ENCODE measurements at regions of chr1 and their contacts with region 1.

Region 1: DNA sequence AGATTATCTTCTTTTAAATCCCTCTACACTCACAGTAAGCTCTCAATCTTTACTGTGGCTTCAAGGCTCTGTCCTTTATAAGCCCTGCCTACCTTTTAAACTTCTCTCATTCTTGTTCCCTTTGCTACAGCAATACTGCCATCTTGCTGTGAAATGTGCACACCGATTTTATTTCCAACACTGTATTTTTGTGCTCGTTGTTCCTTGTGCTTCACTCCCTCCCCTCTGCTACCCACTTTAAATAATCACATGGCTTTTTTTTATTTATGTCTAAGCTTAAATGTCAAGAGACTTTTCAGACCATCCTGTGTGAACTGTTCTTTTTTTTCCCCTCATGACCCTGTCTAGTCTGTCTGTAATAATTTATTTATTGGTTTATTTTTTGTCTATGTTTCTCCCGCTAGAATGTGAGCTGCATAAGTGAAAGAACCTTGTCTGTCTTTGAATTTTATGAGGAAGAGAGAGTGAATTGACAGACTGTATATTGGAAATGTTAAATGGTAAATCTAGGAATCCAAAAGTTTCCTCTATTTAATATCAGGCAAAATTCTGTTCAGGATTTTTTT is 45.7 kb downstream of the ABCD3 start:
- DNase-seq: no peak
- ATAC-seq: peak; percentile 68
- H3K4me3 ChIP-seq: no peak overlapping the region
- H3K27ac ChIP-seq: no peak overlapping the region
- H3K4me1 ChIP-seq: no peaks in the 10 kb centered on the region
- H3K27me3 ChIP-seq: no peaks in the 10 kb centered on the region
- CTCF ChIP-seq: peak; percentile 21 to 64 (median 49); a peak in 5 of 6 replicates
- EP300 ChIP-seq: no peak
- POLR2A ChIP-seq: no peak
- RAD21 ChIP-seq: peak; percentile 78

Region 2: DNA sequence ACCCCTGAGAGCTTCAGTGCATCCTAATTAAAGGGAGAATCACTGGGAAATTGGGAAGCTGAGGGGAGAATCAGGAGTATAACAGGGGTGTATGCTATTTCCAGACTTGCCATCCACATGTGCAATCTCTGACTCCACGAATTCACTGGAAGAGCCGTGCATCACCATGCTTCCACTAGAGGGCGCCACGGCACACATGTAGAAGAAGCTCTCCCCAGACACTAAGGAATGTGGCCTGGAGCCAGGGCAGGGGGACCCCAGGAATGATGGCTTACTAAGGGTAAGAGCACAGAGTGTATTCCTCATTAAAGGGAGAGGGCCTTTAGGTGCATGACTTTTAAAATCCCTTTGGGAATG is 424.4 kb before region 1 on chr1:
- CTCF ChIA-PET with region 1: interaction called, 32 read pairs
- POLR2A ChIA-PET with region 1: no interaction called
- RAD21 ChIA-PET with region 1: interaction called, 3 read pairs
- SMC1A ChIA-PET with region 1: interaction called, 7 read pairs
- in situ Hi-C with region 1: no loop called
- intact Hi-C with region 1: no loop called
- DNase-seq: no peak
- ATAC-seq: peak; percentile 65
- H3K4me3 ChIP-seq: no peak overlapping the region
- H3K27ac ChIP-seq: no peak overlapping the region
- H3K4me1 ChIP-seq: peaks cover 6% of the 10 kb centered on the region; the same call in 1 of the 2 replicates
- H3K27me3 ChIP-seq: no peaks in the 10 kb centered on the region; a peak in 1 of 4 replicates
- CTCF ChIP-seq: peak; percentile 78 to 92 (median 86)
- EP300 ChIP-seq: no peak
- POLR2A ChIP-seq: no peak
- RAD21 ChIP-seq: peak; percentile 53

Region 3: DNA sequence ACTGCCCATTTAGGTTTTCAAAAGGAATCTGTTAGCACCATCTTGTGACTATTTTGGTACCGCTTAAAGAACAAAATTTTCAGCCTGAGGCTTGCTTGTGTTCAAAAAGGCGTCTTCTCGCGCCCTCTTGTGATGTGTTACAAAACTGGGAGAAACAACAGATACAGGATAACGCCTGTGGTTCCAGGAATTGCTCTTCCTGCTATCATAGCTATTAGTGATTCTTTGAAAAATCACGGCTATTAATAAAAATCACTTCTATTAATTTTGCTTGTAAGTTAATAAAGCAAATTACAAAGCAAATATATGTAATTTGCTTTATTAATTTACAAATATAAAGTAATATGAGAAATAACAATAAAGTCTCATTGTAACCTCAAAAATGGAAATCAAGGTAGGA is 127.9 kb before region 1 on chr1:
- CTCF ChIA-PET with region 1: interaction called, 28 read pairs
- POLR2A ChIA-PET with region 1: no interaction called
- RAD21 ChIA-PET with region 1: interaction called, 12 read pairs
- SMC1A ChIA-PET with region 1: interaction called, 29 read pairs
- in situ Hi-C with region 1: no loop called
- intact Hi-C with region 1: loop called (anchors 5 kb)
- DNase-seq: no peak
- ATAC-seq: peak; percentile 69
- H3K4me3 ChIP-seq: no peak overlapping the region
- H3K27ac ChIP-seq: no peak overlapping the region; the same call in 1 of the 2 replicates
- H3K4me1 ChIP-seq: peaks cover 23% of the 10 kb centered on the region
- H3K27me3 ChIP-seq: no peaks in the 10 kb centered on the region
- CTCF ChIP-seq: peak; percentile 61 to 82 (median 81)
- EP300 ChIP-seq: no peak
- POLR2A ChIP-seq: no peak
- RAD21 ChIP-seq: peak; percentile 93

Region 4: GRCh38 chr1:94406446-94406845 is 57.4 kb before region 1 on chr1:
- CTCF ChIA-PET with region 1: no interaction called
- POLR2A ChIA-PET with region 1: no interaction called
- RAD21 ChIA-PET with region 1: no interaction called
- SMC1A ChIA-PET with region 1: no interaction called
- in situ Hi-C with region 1: no loop called
- intact Hi-C with region 1: no loop called
- DNase-seq: no peak
- ATAC-seq: no peak
- H3K4me3 ChIP-seq: no peak overlapping the region
- H3K27ac ChIP-seq: no peak overlapping the region
- H3K4me1 ChIP-seq: no peaks in the 10 kb centered on the region
- H3K27me3 ChIP-seq: peaks cover 0 to 3% of the 10 kb centered on the region in 2 experiments; a peak in 1 of 4 replicates
- CTCF ChIP-seq: no peak
- EP300 ChIP-seq: no peak
- POLR2A ChIP-seq: no peak
- RAD21 ChIP-seq: no peak

Region 5: DNA sequence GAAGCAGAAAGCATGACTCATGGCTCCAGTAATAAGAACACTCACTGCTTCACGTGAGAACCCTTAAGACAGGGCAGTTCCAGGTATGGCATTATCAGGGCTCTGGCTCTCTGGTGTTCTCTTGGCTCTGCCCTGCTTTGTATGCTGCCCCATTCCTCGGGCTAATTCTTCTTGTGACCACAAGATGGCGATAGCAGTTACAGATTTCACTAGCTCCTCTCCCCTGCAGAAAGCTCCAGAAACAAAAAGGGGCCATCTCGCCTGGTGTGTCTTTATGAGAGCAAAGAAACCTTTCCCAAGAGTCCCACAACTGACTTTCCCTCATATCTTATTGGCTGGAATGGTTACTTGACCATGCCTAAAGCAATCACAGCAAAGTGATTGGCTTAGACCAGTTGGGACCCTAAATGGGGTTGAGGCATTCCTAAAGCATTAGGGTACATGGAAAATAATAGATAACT is 17.7 kb after region 1 on chr1:
- CTCF ChIA-PET with region 1: interaction called, 45 read pairs
- POLR2A ChIA-PET with region 1: no interaction called
- RAD21 ChIA-PET with region 1: interaction called, 3 read pairs
- SMC1A ChIA-PET with region 1: interaction called, 4 read pairs
- in situ Hi-C with region 1: no loop called
- intact Hi-C with region 1: no loop called
- DNase-seq: peak; percentile 9
- ATAC-seq: peak; percentile 98
- H3K4me3 ChIP-seq: no peak overlapping the region
- H3K27ac ChIP-seq: no peak overlapping the region
- H3K4me1 ChIP-seq: no peaks in the 10 kb centered on the region
- H3K27me3 ChIP-seq: no peaks in the 10 kb centered on the region
- CTCF ChIP-seq: peak; percentile 79 to 84 (median 83)
- EP300 ChIP-seq: no peak
- POLR2A ChIP-seq: no peak
- RAD21 ChIP-seq: peak; percentile 82

Region 6: GRCh38 chr1:94544706-94545490 is 81.0 kb after region 1 on chr1:
- CTCF ChIA-PET with region 1: no interaction called
- POLR2A ChIA-PET with region 1: no interaction called
- RAD21 ChIA-PET with region 1: no interaction called
- SMC1A ChIA-PET with region 1: no interaction called
- in situ Hi-C with region 1: no loop called
- intact Hi-C with region 1: no loop called
- DNase-seq: no peak
- ATAC-seq: no peak
- H3K4me3 ChIP-seq: no peak overlapping the region
- H3K27ac ChIP-seq: no peak overlapping the region
- H3K4me1 ChIP-seq: peaks cover 12% of the 10 kb centered on the region; the same call in 1 of the 2 replicates
- H3K27me3 ChIP-seq: peaks cover 2 to 7% of the 10 kb centered on the region in 2 experiments
- CTCF ChIP-seq: no peak
- EP300 ChIP-seq: no peak
- POLR2A ChIP-seq: no peak
- RAD21 ChIP-seq: no peak

Measured in GM12878 (cell line).